ENCODE measurements at regions of chr4 and their contacts with region 1.

Region 1: DNA sequence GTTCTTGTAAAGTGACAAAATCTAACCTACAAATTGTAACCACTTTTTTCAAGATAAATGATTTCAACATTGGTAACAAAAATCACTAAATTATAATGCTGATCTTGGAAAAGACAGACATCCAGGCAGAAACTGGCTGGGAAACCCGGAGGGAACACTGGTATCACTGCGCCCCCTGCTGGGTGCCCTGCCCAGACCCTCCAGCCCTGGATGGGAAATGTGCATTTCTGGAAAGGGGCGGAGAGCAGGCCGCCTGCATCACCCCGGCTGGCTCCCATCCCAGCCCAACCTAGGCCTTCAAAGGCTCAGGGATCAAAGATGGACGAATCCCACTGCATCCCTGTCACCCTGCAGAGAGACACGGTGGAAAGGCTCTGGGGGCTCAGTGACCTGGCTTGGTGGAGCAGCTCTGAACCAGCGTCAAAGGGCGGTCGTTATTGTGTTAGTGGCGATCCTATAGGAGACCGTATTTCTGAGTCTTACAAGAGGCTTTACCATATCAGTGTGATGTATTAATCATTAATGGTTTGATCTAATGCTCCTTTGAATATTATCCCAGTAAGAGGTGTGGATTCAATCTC is 37.3 kb downstream of the ACOX3 start:
- DNase-seq: peak; percentile 75 to 91 (median 87)
- ATAC-seq: peak; percentile 93
- H3K4me3 ChIP-seq: no peak overlapping the region
- H3K27ac ChIP-seq: no peak overlapping the region
- H3K4me1 ChIP-seq: peaks cover 0 to 13% of the 10 kb centered on the region in 2 experiments; a peak in 1 of 5 replicates
- H3K27me3 ChIP-seq: no peaks in the 10 kb centered on the region
- CTCF ChIP-seq: peak; percentile 86 to 97 (median 92)
- EP300 ChIP-seq: no peak
- POLR2A ChIP-seq: no peak
- RAD21 ChIP-seq: peak; percentile 96

Region 2: GRCh38 chr4:8168232-8168631 is 235.0 kb before region 1 on chr4:
- CTCF ChIA-PET with region 1: no interaction called
- POLR2A ChIA-PET with region 1: no interaction called
- in situ Hi-C with region 1: loop called (anchors 10 kb)
- intact Hi-C with region 1: loop called (anchors 10 kb)
- DNase-seq: peak in 2 of 4 experiments; percentile 53 to 60
- ATAC-seq: no peak
- H3K4me3 ChIP-seq: no peak overlapping the region
- H3K27ac ChIP-seq: no peak overlapping the region
- H3K4me1 ChIP-seq: no peaks in the 10 kb centered on the region
- H3K27me3 ChIP-seq: peaks cover 6 to 32% of the 10 kb centered on the region in 2 experiments; a peak in 4 of 5 replicates
- CTCF ChIP-seq: peak in 2 of 3 experiments; percentile 24 to 54; a peak in 3 of 6 replicates
- EP300 ChIP-seq: no peak
- POLR2A ChIP-seq: no peak
- RAD21 ChIP-seq: no peak

Region 3: DNA sequence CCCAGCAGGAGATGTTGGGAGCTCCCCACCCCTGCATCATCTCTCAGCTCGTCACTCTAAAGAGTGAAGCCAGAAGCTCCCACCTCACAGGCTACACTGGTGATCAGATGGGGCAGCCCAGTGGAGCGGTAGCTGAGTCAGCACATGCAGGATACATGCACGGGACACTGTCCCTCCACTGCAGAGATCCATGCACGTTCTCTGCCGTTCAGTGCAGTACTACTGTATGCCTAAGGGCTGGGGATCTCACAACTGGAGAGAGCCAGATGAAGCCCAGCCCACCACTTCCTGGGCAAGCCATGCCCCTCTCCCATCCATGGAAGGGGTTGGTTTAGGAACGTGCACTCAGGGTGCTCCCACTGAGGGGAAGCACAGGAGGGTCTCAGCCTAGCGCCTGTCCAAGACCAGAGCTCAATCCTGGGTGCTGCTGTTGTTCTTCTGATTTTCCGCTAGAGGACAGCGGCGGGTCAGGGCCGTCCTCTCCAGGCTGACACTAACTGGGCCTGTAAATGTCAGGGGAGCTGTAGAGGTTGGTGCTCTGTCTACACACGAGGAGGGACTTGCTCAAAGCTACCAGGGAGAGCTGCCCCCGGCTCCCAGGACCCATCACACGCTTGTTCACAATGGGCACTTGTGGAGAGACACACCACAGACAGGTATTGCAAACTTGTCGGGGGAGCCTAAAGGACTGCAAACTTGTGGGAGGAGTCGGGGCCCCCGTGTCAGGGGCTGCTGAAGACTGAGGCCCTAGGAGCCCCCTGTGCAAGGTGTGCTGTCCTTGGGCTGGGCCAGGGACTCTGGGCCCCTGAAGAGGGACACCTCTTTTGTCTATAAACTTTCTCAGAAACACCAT is 226.5 kb before region 1 on chr4:
- CTCF ChIA-PET with region 1: interaction called, 8 read pairs
- POLR2A ChIA-PET with region 1: no interaction called
- in situ Hi-C with region 1: no loop called
- intact Hi-C with region 1: loop called (anchors 10 kb)
- DNase-seq: peak; percentile 49 to 60 (median 52)
- ATAC-seq: peak; percentile 96
- H3K4me3 ChIP-seq: no peak overlapping the region
- H3K27ac ChIP-seq: no peak overlapping the region
- H3K4me1 ChIP-seq: peaks cover 0 to 5% of the 10 kb centered on the region in 2 experiments; a peak in 2 of 5 replicates
- H3K27me3 ChIP-seq: peaks cover 4 to 29% of the 10 kb centered on the region in 2 experiments; a peak in 3 of 5 replicates
- CTCF ChIP-seq: peak; percentile 79 to 87 (median 84)
- EP300 ChIP-seq: no peak
- POLR2A ChIP-seq: no peak
- RAD21 ChIP-seq: peak; percentile 86 to 93

Region 4: DNA sequence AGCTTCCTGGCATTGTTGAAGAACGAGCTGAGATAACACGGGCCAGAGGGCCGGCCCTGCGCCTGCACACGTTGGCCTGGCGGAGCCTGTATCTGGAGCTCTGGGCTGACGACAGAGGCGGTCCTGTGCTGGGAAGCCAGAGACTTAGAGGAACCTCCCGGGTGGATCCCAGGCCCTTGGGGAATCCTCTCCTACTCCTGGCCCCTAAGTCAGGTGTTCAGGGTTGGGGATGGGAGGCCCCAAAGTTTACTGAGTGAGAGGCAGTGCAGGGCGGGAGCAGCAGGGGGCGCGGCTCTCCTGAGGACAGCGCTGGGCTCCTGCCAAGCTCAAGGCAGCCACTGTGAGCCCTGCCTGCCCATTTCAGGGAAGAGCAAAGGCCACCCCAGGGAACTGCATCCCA is 136.2 kb before region 1 on chr4:
- CTCF ChIA-PET with region 1: interaction called, 22 read pairs
- POLR2A ChIA-PET with region 1: no interaction called
- in situ Hi-C with region 1: no loop called
- intact Hi-C with region 1: loop called (anchors 1 kb)
- DNase-seq: peak; percentile 71 to 83 (median 81)
- ATAC-seq: peak; percentile 96
- H3K4me3 ChIP-seq: no peak overlapping the region
- H3K27ac ChIP-seq: no peak overlapping the region
- H3K4me1 ChIP-seq: peaks cover 0 to 33% of the 10 kb centered on the region in 2 experiments; a peak in 4 of 5 replicates
- H3K27me3 ChIP-seq: peaks cover 0 to 20% of the 10 kb centered on the region in 2 experiments; a peak in 2 of 5 replicates
- CTCF ChIP-seq: peak; percentile 85 to 88 (median 86)
- EP300 ChIP-seq: no peak
- POLR2A ChIP-seq: no peak
- RAD21 ChIP-seq: peak; percentile 86 to 90

Region 5: GRCh38 chr4:8274765-8275547 is 128.3 kb before region 1 on chr4:
- CTCF ChIA-PET with region 1: interaction called, 10 read pairs
- POLR2A ChIA-PET with region 1: no interaction called
- in situ Hi-C with region 1: no loop called
- intact Hi-C with region 1: loop called (anchors 2 kb)
- DNase-seq: peak in 1 of 4 experiments; percentile 16
- ATAC-seq: peak; percentile 57; the same call in 2 of the 3 replicates
- H3K4me3 ChIP-seq: no peak overlapping the region
- H3K27ac ChIP-seq: no peak overlapping the region
- H3K4me1 ChIP-seq: peaks cover 0 to 31% of the 10 kb centered on the region in 2 experiments; a peak in 2 of 5 replicates
- H3K27me3 ChIP-seq: peaks cover 0 to 55% of the 10 kb centered on the region in 2 experiments
- CTCF ChIP-seq: peak in 2 of 3 experiments; percentile 43 to 54; a peak in 3 of 6 replicates
- EP300 ChIP-seq: no peak
- POLR2A ChIP-seq: no peak
- RAD21 ChIP-seq: peak; percentile 34 to 49; a peak in 3 of 4 replicates

Region 6: GRCh38 chr4:8320386-8320750 is 82.9 kb before region 1 on chr4:
- CTCF ChIA-PET with region 1: interaction called, 5 read pairs
- POLR2A ChIA-PET with region 1: no interaction called
- in situ Hi-C with region 1: no loop called
- intact Hi-C with region 1: loop called (anchors 5 kb)
- DNase-seq: peak; percentile 24 to 33 (median 28)
- ATAC-seq: peak; percentile 78
- H3K4me3 ChIP-seq: no peak overlapping the region
- H3K27ac ChIP-seq: no peak overlapping the region
- H3K4me1 ChIP-seq: peaks cover 0 to 16% of the 10 kb centered on the region in 2 experiments; a peak in 2 of 5 replicates
- H3K27me3 ChIP-seq: peaks cover 0 to 44% of the 10 kb centered on the region in 2 experiments; a peak in 2 of 5 replicates
- CTCF ChIP-seq: peak; percentile 41 to 60 (median 57)
- EP300 ChIP-seq: no peak
- POLR2A ChIP-seq: no peak
- RAD21 ChIP-seq: peak in 1 of 2 experiments; percentile 65; a peak in 2 of 4 replicates

Measured in K562 (cell line).